Vagina (tissue), 2 donors: ENCODE measurements at regions of chr3 and their contacts with region 1.

Region 1: GRCh38 chr3:23017780-23018179 is 185.3 kb upstream of the UBE2E2 start:
- DNase-seq: no peak
- H3K4me3 ChIP-seq: no peak overlapping the region
- H3K27ac ChIP-seq: no peak overlapping the region
- H3K4me1 ChIP-seq: peaks cover 21% of the 10 kb centered on the region
- H3K27me3 ChIP-seq: no peaks in the 10 kb centered on the region
- CTCF ChIP-seq: no peak
- POLR2A ChIP-seq: no peak

Region 2: GRCh38 chr3:23068016-23068728 is 50.4 kb after region 1 on chr3:
- intact Hi-C with region 1: no loop called
- DNase-seq: no peak
- H3K4me3 ChIP-seq: no peak overlapping the region
- H3K27ac ChIP-seq: no peak overlapping the region
- H3K4me1 ChIP-seq: no peaks in the 10 kb centered on the region
- H3K27me3 ChIP-seq: no peaks in the 10 kb centered on the region
- CTCF ChIP-seq: no peak
- POLR2A ChIP-seq: no peak

Region 3: GRCh38 chr3:23103757-23104156 is 86.0 kb after region 1 on chr3:
- intact Hi-C with region 1: loop called (anchors 5 kb)
- DNase-seq: no peak
- H3K4me3 ChIP-seq: no peak overlapping the region
- H3K27ac ChIP-seq: no peak overlapping the region
- H3K4me1 ChIP-seq: no peaks in the 10 kb centered on the region
- H3K27me3 ChIP-seq: no peaks in the 10 kb centered on the region
- CTCF ChIP-seq: no peak
- POLR2A ChIP-seq: no peak

Region 4: DNA sequence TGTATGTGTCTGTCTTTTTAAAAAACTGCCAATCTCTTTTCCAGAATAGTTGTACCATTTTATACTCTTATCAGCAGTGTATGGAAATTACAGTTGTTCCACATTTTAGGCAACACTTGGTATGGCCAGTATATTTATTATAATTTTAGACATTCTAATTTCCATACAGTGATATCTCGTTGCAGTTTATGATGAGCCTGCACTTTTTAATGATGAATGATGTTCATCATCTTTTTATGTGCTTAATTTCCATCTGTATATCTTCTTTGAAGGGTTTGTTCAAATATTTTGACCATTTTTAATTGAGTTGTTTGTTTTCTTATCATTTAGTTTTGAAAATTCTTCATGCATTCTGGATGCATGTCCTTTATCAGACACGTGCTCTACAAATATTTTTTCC is 128.4 kb after region 1 on chr3:
- intact Hi-C with region 1: no loop called
- DNase-seq: no peak
- H3K4me3 ChIP-seq: no peak overlapping the region
- H3K27ac ChIP-seq: no peak overlapping the region
- H3K4me1 ChIP-seq: no peaks in the 10 kb centered on the region
- H3K27me3 ChIP-seq: no peaks in the 10 kb centered on the region
- CTCF ChIP-seq: no peak
- POLR2A ChIP-seq: no peak